ENCODE measurements at regions of chr9 and their contacts with region 1.

Region 1: DNA sequence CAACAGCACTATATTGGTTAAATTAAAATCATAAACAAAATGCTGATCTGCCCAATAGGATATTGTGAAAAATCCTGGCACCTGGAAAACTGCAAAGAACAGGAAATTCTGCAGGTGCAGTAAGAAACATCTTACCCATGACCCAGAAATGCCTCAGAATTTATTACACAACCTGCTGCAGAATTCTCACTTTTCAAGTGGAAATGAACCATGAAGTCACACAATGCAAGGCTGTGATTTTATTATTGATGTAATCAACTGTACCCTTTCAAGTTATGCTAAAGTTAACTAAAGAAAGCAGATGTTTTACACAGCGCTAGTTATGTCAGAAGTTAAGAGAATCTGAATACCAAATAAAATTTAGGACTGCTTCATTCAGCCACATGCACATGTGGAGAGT is 6.0 kb downstream of the STRBP start:
- DNase-seq: no peak
- H3K4me3 ChIP-seq: no peak overlapping the region
- H3K27ac ChIP-seq: no peak overlapping the region
- H3K4me1 ChIP-seq: no peaks in the 10 kb centered on the region
- H3K27me3 ChIP-seq: no peaks in the 10 kb centered on the region
- CTCF ChIP-seq: no peak

Region 2: DNA sequence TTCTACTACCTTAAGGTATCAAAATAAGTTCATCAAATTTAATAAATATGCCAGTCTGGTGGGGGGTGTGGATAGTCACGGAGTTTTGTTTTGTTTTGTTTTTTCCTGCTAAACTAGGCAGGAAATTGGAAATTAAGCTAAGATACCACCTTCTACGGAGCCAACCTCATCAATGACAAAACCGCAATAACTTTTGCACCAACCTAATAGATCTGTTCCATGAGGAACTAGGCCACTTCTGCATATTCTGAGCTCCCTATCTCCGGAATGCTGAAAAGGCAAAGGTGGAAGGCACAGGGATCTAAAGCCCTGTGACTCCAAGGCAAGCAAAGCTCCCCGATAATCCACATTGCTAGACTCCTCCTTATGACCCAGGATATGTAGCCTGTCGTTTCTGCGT is 544.3 kb before region 1 on chr9:
- CTCF ChIA-PET with region 1: no interaction called
- dilution Hi-C with region 1: no loop called
- in situ Hi-C with region 1: no loop called
- intact Hi-C with region 1: no loop called
- DNase-seq: no peak
- H3K4me3 ChIP-seq: no peak overlapping the region
- H3K27ac ChIP-seq: no peak overlapping the region
- H3K4me1 ChIP-seq: no peaks in the 10 kb centered on the region
- H3K27me3 ChIP-seq: no peaks in the 10 kb centered on the region
- CTCF ChIP-seq: no peak

Region 3: GRCh38 chr9:123331346-123332060 is 69.2 kb after region 1 on chr9:
- CTCF ChIA-PET with region 1: no interaction called
- dilution Hi-C with region 1: loop called (anchors 5 kb)
- in situ Hi-C with region 1: no loop called
- intact Hi-C with region 1: no loop called
- DNase-seq: no peak
- H3K4me3 ChIP-seq: no peak overlapping the region
- H3K27ac ChIP-seq: no peak overlapping the region
- H3K4me1 ChIP-seq: peaks cover 26% of the 10 kb centered on the region
- H3K27me3 ChIP-seq: no peaks in the 10 kb centered on the region
- CTCF ChIP-seq: no peak